A673 (cell line): ENCODE measurements at regions of chr7 and their contacts with region 1.

Region 1: GRCh38 chr7:23105644-23106056 is at the start of gene KLHL7:
- DNase-seq: peak; percentile 97
- H3K4me3 ChIP-seq: peak within 1 kb of the TSS; percentile 74
- H3K27ac ChIP-seq: peak within 1 kb of the TSS; percentile 90
- H3K4me1 ChIP-seq: peaks cover 14% of the 10 kb centered on the region
- H3K27me3 ChIP-seq: no peaks in the 10 kb centered on the region
- CTCF ChIP-seq: no peak
- total RNA-seq, gene KLHL7: 43.0 and 43.8 TPM in 2 replicates

Region 2: GRCh38 chr7:23181684-23182553 is 76.3 kb after region 1 on chr7 and contains the start of gene NUP42:
- CTCF ChIA-PET with region 1: no interaction called
- POLR2A ChIA-PET with region 1: no interaction called
- intact Hi-C with region 1: loop called (anchors 2 kb)
- DNase-seq: peak; percentile 99
- H3K4me3 ChIP-seq: peak within 1 kb of the TSS; percentile 83
- H3K27ac ChIP-seq: peak within 1 kb of the TSS; percentile 90
- H3K4me1 ChIP-seq: peaks cover 27% of the 10 kb centered on the region
- H3K27me3 ChIP-seq: no peaks in the 10 kb centered on the region
- CTCF ChIP-seq: no peak
- total RNA-seq, gene NUP42: 31.0 and 38.2 TPM in 2 replicates

Region 3: GRCh38 chr7:23628370-23628769 is 522.7 kb after region 1 on chr7:
- CTCF ChIA-PET with region 1: no interaction called
- POLR2A ChIA-PET with region 1: interaction called, 10 read pairs
- intact Hi-C with region 1: no loop called
- DNase-seq: no peak
- H3K4me3 ChIP-seq: no peak overlapping the region
- H3K27ac ChIP-seq: no peak overlapping the region
- H3K4me1 ChIP-seq: no peaks in the 10 kb centered on the region
- H3K27me3 ChIP-seq: no peaks in the 10 kb centered on the region
- CTCF ChIP-seq: no peak